Calu3 (cell line): ENCODE measurements at regions of chr7 and their contacts with region 1.

Region 1: GRCh38 chr7:155921804-155922721 is 109.8 kb upstream of the SHH start:
- DNase-seq: peak; percentile 92
- H3K4me3 Mint-ChIP-seq: peak overlapping the region; percentile 65
- H3K27ac Mint-ChIP-seq: peak overlapping the region; percentile 95
- H3K4me1 Mint-ChIP-seq: peaks cover 73% of the 10 kb centered on the region
- H3K27me3 Mint-ChIP-seq: no peaks in the 10 kb centered on the region
- CTCF ChIP-seq: no peak

Region 2: GRCh38 chr7:155644178-155644970 is 277.7 kb before region 1 on chr7 and contains the start of gene RBM33:
- CTCF ChIA-PET with region 1: no interaction called
- intact Hi-C with region 1: no loop called
- DNase-seq: peak; percentile 79
- H3K4me3 Mint-ChIP-seq: peak within 1 kb of the TSS; percentile 83
- H3K27ac Mint-ChIP-seq: peak within 1 kb of the TSS; percentile 91
- H3K4me1 Mint-ChIP-seq: peaks cover 19% of the 10 kb centered on the region
- H3K27me3 Mint-ChIP-seq: no peaks in the 10 kb centered on the region
- CTCF ChIP-seq: no peak
- total RNA-seq, gene RBM33: 82.9 and 85.3 TPM in 2 replicates

Region 3: DNA sequence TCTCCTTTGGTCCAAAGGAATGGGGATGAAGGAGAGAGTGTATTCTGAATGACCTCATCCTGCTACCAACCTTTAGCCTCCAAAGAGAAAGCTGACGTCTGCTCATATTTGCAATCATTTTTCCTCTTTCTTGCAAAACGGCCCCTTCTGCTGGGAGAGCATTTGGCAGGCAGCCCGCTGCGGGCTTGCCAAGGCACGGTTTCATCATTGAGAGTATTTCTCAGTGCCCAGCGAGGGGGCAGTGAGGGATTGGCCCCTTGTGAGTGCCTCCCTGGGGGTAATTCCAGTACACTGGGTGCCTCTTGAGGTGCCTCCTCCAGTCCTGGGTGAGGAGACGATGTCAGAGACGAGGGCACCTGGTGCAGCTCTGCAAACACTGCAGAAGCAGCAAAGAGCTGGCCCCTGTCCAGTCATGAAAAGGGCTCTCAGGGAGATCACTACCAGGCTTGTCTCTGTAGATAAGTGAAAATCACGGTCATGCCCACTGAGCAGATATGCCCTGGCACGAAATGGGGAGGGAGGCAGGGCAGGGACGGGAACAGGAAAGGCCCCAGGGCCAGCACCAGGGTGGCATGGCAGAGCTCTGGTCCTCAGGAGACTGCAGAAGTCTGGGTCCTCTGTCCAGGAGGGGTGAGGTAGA is 61.1 kb before region 1 on chr7:
- CTCF ChIA-PET with region 1: interaction called, 3 read pairs
- intact Hi-C with region 1: loop called (anchors 2 kb)
- DNase-seq: peak; percentile 88
- H3K4me3 Mint-ChIP-seq: peak overlapping the region; percentile 6
- H3K27ac Mint-ChIP-seq: peak overlapping the region; percentile 34
- H3K4me1 Mint-ChIP-seq: peaks cover 21% of the 10 kb centered on the region
- H3K27me3 Mint-ChIP-seq: peaks cover 19% of the 10 kb centered on the region
- CTCF ChIP-seq: no peak

Region 4: GRCh38 chr7:155945670-155946325 is 23.7 kb after region 1 on chr7:
- CTCF ChIA-PET with region 1: no interaction called
- intact Hi-C with region 1: no loop called
- DNase-seq: no peak
- H3K4me3 Mint-ChIP-seq: no peak overlapping the region
- H3K27ac Mint-ChIP-seq: no peak overlapping the region
- H3K4me1 Mint-ChIP-seq: peaks cover 8% of the 10 kb centered on the region
- H3K27me3 Mint-ChIP-seq: no peaks in the 10 kb centered on the region
- CTCF ChIP-seq: no peak

Region 5: GRCh38 chr7:156380261-156380660 is 458.2 kb after region 1 on chr7:
- CTCF ChIA-PET with region 1: no interaction called
- intact Hi-C with region 1: loop called (anchors 2 kb)
- DNase-seq: peak; percentile 61
- H3K4me3 Mint-ChIP-seq: peak overlapping the region; percentile 17
- H3K27ac Mint-ChIP-seq: peak overlapping the region; percentile 58
- H3K4me1 Mint-ChIP-seq: peaks cover 15% of the 10 kb centered on the region
- H3K27me3 Mint-ChIP-seq: peaks cover 15% of the 10 kb centered on the region
- CTCF ChIP-seq: no peak